ENCODE measurements at regions of chr19 and their contacts with region 1.

Region 1: GRCh38 chr19:12681074-12681951 is at the start of gene DHPS:
- DNase-seq: peak; percentile 97
- H3K4me3 Mint-ChIP-seq: peak within 1 kb of the TSS; percentile 93
- H3K27ac Mint-ChIP-seq: peak within 1 kb of the TSS; percentile 91
- H3K4me1 Mint-ChIP-seq: peaks cover 26% of the 10 kb centered on the region
- H3K27me3 Mint-ChIP-seq: no peaks in the 10 kb centered on the region
- total RNA-seq, gene DHPS: 89.9 to 102 TPM

Region 2: GRCh38 chr19:12656899-12657571 is 24.3 kb before region 1 on chr19:
- CTCF ChIA-PET with region 1: no interaction called
- POLR2A ChIA-PET with region 1: no interaction called
- DNase-seq: no peak
- H3K4me3 Mint-ChIP-seq: no peak overlapping the region
- H3K27ac Mint-ChIP-seq: no peak overlapping the region
- H3K4me1 Mint-ChIP-seq: peaks cover 5% of the 10 kb centered on the region
- H3K27me3 Mint-ChIP-seq: no peaks in the 10 kb centered on the region

Region 3: GRCh38 chr19:12669270-12670158 is 11.8 kb before region 1 on chr19:
- CTCF ChIA-PET with region 1: interaction called, 23 read pairs
- POLR2A ChIA-PET with region 1: interaction called, 8 read pairs
- DNase-seq: peak; percentile 78
- H3K4me3 Mint-ChIP-seq: peak overlapping the region; percentile 96
- H3K27ac Mint-ChIP-seq: peak overlapping the region; percentile 99
- H3K4me1 Mint-ChIP-seq: peaks cover 54% of the 10 kb centered on the region
- H3K27me3 Mint-ChIP-seq: no peaks in the 10 kb centered on the region

Region 4: GRCh38 chr19:12705654-12706331 is 24.5 kb after region 1 on chr19:
- CTCF ChIA-PET with region 1: no interaction called
- POLR2A ChIA-PET with region 1: no interaction called
- DNase-seq: no peak
- H3K4me3 Mint-ChIP-seq: no peak overlapping the region
- H3K27ac Mint-ChIP-seq: no peak overlapping the region
- H3K4me1 Mint-ChIP-seq: no peaks in the 10 kb centered on the region
- H3K27me3 Mint-ChIP-seq: no peaks in the 10 kb centered on the region

Region 5: DNA sequence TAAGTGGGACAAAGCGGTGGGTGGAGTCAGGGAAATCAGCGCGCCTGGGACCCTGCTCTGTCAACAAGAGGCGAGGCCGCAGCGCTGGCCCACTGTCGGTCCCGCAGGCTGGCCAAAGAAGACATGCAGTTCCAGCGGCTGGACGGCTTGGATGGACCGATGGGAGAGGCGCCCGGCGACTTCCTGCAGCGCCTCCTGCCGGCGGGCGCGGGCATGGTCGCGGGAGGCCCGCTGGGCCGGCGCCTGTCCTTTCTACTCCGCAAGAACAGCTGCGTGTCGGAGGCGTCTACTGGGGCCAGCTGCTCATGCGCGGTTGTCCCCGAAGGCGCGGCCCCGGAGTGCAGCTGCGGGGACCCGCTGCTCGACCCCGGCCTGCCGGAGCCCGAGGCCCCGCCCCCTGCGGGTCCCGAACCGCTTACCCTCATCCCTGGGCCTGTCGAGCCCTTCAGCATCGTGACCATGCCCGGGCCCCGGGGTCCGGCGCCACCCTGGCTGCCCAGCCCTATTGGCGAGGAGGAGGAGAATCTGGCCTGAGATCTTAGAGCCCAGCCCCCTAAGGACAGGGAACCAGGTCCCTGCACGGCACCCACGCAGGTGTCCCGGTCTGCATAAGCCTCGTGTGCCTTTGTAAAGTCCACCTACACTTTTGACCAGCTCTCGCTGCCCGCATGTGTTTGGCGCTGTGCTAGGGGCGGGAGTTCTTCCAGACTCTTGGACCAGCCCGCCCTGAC is 76.4 kb after region 1 on chr19:
- CTCF ChIA-PET with region 1: no interaction called
- POLR2A ChIA-PET with region 1: no interaction called
- DNase-seq: peak; percentile 64
- H3K4me3 Mint-ChIP-seq: peak overlapping the region; percentile 27
- H3K27ac Mint-ChIP-seq: no peak overlapping the region
- H3K4me1 Mint-ChIP-seq: peaks cover 13% of the 10 kb centered on the region
- H3K27me3 Mint-ChIP-seq: peaks cover 4% of the 10 kb centered on the region

Region 6: DNA sequence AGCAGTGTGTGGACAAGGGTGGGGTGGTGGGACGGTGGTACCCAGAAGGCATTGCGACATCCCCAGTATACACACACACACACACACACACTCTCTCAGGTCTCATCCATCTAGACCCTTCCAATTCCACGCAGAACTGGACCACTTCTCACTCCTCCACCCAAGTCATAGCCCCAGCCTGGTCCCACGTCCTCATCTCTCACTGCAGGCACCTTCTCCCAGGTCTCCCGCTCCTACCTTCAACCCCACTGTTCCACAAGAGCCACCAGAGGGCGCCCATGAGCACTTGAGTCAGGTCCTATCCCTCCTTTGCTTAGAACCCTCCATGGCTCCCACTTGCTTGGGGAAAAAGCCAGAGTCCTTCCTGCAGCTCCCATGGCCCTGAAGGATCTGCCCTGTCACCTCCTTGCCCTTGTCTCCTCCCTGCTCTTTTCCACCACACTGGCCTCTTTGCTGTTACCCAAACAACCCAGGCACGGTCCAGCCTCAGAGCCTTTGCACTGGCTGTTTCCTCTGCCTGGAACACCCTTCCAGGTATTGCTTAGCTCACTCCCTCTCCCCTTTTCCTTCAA is 531.5 kb after region 1 on chr19:
- CTCF ChIA-PET with region 1: no interaction called
- POLR2A ChIA-PET with region 1: no interaction called
- DNase-seq: peak; percentile 82
- H3K4me3 Mint-ChIP-seq: no peak overlapping the region
- H3K27ac Mint-ChIP-seq: peak overlapping the region; percentile 51
- H3K4me1 Mint-ChIP-seq: peaks cover 34% of the 10 kb centered on the region
- H3K27me3 Mint-ChIP-seq: no peaks in the 10 kb centered on the region

Measured in activated CD4-positive, alpha-beta T cell treated with anti-CD3 and anti-CD28 coated beads, Interleukin-2, amount 10 ng/mL, durations not matched to agents 7 days and 5 days (primary cell).